Activated naive CD4-positive, alpha-beta T cell treated with anti-CD3 and anti-CD28 coated beads for 36 hours (primary cell): ENCODE measurements at regions of chr5 and their contacts with region 1.

Region 1: GRCh38 chr5:91383027-91383955 is at the start of gene ARRDC3:
- DNase-seq: peak; percentile 95
- H3K4me3 Mint-ChIP-seq: peak within 1 kb of the TSS; percentile 97
- H3K27ac Mint-ChIP-seq: peak within 1 kb of the TSS; percentile 97
- H3K4me1 Mint-ChIP-seq: peaks cover 15% of the 10 kb centered on the region
- H3K27me3 Mint-ChIP-seq: no peaks in the 10 kb centered on the region
- total RNA-seq, gene ARRDC3: 12.8 to 13.8 TPM

Region 2: GRCh38 chr5:90866333-90866732 is 517.0 kb before region 1 on chr5:
- CTCF ChIA-PET with region 1: interaction called, 34 read pairs
- intact Hi-C with region 1: loop called (anchors 1 kb)
- DNase-seq: no peak
- H3K4me3 Mint-ChIP-seq: no peak overlapping the region
- H3K27ac Mint-ChIP-seq: no peak overlapping the region
- H3K4me1 Mint-ChIP-seq: peaks cover 4% of the 10 kb centered on the region
- H3K27me3 Mint-ChIP-seq: peaks cover 7% of the 10 kb centered on the region

Region 3: GRCh38 chr5:91095313-91095712 is 288.0 kb before region 1 on chr5:
- CTCF ChIA-PET with region 1: interaction called, 21 read pairs
- intact Hi-C with region 1: no loop called
- DNase-seq: no peak
- H3K4me3 Mint-ChIP-seq: no peak overlapping the region
- H3K27ac Mint-ChIP-seq: no peak overlapping the region
- H3K4me1 Mint-ChIP-seq: no peaks in the 10 kb centered on the region
- H3K27me3 Mint-ChIP-seq: peaks cover 2% of the 10 kb centered on the region

Region 4: GRCh38 chr5:91219803-91220371 is 163.4 kb before region 1 on chr5:
- CTCF ChIA-PET with region 1: interaction called, 184 read pairs
- intact Hi-C with region 1: no loop called
- DNase-seq: peak; percentile 59
- H3K4me3 Mint-ChIP-seq: no peak overlapping the region
- H3K27ac Mint-ChIP-seq: no peak overlapping the region
- H3K4me1 Mint-ChIP-seq: no peaks in the 10 kb centered on the region
- H3K27me3 Mint-ChIP-seq: no peaks in the 10 kb centered on the region

Region 5: DNA sequence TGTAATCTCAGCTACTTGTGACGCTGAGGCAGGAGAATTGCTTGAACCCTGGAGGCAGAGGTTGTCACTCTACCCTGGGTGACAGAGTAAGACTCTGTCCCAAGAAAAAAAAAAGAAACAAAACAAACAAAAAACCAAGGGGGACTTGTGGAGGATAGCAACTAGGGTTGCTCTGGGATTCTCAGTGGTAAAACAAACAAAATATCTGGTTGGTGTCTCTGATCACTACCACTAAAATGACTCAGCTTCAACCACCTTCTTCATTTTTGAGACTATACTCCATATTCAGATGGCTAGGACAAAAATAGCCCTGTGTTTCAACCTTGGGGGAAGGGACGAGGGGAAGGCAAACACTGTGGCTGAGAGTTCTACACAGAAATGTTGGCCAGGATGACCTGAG is 110.4 kb before region 1 on chr5:
- CTCF ChIA-PET with region 1: interaction called, 17 read pairs
- intact Hi-C with region 1: loop called (anchors 1 kb)
- DNase-seq: no peak
- H3K4me3 Mint-ChIP-seq: no peak overlapping the region
- H3K27ac Mint-ChIP-seq: no peak overlapping the region
- H3K4me1 Mint-ChIP-seq: peaks cover 15% of the 10 kb centered on the region
- H3K27me3 Mint-ChIP-seq: no peaks in the 10 kb centered on the region

Region 6: DNA sequence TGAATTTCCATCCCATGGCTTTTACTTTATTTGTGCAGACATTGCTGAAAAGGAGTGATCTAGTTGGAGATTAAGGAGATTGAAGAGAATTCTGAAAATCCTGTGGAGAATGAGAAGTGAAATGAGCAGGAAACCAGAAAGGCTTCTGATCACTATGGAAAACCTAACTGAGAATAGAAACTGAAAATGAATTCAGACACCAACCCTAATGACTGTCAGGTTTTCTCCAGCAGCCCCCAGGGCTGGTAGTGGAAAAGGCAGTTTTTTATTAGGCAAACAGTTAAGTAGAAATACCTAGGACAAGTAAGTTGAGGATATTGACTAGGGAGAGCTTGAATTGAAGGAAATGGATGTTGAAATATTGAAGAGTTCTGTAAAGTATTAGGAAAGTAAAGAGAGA is 14.5 kb after region 1 on chr5:
- CTCF ChIA-PET with region 1: interaction called, 21 read pairs
- intact Hi-C with region 1: no loop called
- DNase-seq: no peak
- H3K4me3 Mint-ChIP-seq: no peak overlapping the region
- H3K27ac Mint-ChIP-seq: no peak overlapping the region
- H3K4me1 Mint-ChIP-seq: peaks cover 9% of the 10 kb centered on the region
- H3K27me3 Mint-ChIP-seq: no peaks in the 10 kb centered on the region